Activated B cell treated with CpG ODN at 0.5 μM for 24 hours (primary cell): ENCODE measurements at regions of chr16 and their contacts with region 1.

Region 1: DNA sequence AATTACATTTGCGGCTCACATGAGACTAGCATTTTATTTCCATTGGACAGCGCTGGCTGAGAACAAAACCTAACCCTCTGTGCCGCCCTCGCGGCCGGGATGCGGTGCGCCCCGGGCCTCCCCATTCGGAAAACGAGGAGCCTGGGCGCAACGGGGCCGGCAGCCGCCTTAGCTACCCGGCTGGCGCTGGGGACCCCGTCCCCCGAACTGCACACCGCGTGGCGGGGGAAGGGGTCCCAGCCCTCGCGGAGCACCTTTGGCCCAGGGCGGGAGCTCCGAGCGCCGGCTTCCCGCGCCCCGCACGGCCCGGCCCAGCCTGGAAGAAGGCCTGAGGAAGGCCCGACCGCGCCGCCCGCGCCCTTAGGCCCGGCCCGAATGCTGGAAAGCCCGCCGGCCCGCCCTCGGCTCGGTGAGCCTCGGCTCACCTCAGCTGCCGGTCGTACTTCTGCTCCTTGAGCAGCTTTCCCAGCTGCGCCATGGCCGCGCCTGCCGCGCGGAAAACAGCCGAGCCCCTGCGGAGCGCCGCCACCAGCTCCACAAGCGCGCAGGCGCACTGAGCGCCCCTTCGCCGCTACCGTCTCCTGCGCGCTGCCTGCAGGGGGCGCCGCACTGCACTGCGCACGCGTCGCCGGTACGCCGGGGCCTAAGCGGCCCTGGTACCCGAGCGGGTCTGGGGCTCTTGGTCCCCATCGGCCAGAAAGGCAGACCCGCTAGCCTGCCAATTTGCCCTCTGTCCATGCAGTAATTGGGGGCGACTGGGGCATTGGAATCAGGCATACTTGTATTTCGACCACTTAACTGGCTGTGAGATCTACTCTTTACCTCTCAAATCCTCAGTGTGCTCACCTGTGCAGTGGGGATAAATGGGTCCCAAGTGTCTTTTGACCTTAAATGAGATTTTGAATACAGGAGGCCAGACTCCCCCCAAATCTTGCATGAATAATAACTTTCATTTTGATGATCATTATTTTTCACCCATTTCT is at the start of gene NAE1:
- DNase-seq: peak; percentile 94
- ATAC-seq: peak; percentile 98
- H3K4me3 Mint-ChIP-seq: peak within 1 kb of the TSS; percentile 78
- H3K27ac Mint-ChIP-seq: peak within 1 kb of the TSS; percentile 53
- H3K4me1 Mint-ChIP-seq: peaks cover 27% of the 10 kb centered on the region
- H3K27me3 Mint-ChIP-seq: no peaks in the 10 kb centered on the region
- CTCF ChIP-seq: peak; percentile 94
- total RNA-seq, gene NAE1: 53.7 and 54.1 TPM in 2 replicates

Region 2: DNA sequence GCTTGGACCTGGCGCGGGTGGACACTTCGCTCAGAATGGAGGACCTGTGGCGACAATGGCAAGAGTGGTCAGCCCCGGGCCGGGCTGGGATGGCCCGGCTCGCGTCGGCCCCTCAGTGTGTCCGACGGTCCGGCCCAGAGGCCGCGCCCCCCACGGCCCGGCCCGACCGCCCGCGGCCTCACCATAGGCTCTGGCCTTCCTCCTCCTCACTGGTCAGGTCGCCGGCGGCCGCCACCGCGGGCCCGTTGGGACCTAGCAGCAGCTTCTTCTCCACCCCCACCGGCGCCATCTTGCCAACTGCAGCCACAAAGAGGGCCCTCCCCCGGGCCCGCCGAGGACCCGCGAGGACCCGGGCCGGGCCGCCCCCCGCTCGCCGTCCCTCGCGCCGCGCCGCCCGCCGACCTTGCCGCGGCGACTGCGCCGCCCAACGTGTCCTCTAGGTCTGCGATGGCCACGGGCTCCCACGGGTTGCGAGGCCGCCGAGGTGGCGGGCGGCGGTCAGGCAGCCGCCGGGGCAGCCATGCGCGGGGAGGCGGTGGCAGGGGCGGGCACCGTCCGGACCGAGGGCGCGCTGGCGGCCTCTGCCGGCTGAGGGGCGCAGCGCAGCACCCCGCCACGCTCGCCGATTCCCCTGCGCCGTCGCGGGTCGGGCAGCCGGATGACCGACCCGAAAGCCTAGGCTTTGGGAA is 79.3 kb before region 1 on chr16 and contains the start of gene DYNC1LI2:
- CTCF ChIA-PET with region 1: interaction called, 4 read pairs
- POLR2A ChIA-PET with region 1: no interaction called
- intact Hi-C with region 1: loop called (anchors 2 kb)
- DNase-seq: peak; percentile 92
- ATAC-seq: peak; percentile 96
- H3K4me3 Mint-ChIP-seq: peak within 1 kb of the TSS; percentile 88
- H3K27ac Mint-ChIP-seq: peak within 1 kb of the TSS; percentile 87
- H3K4me1 Mint-ChIP-seq: peaks cover 34% of the 10 kb centered on the region
- H3K27me3 Mint-ChIP-seq: peaks cover 7% of the 10 kb centered on the region
- CTCF ChIP-seq: no peak
- total RNA-seq, gene DYNC1LI2: 64.3 and 84.4 TPM in 2 replicates

Region 3: DNA sequence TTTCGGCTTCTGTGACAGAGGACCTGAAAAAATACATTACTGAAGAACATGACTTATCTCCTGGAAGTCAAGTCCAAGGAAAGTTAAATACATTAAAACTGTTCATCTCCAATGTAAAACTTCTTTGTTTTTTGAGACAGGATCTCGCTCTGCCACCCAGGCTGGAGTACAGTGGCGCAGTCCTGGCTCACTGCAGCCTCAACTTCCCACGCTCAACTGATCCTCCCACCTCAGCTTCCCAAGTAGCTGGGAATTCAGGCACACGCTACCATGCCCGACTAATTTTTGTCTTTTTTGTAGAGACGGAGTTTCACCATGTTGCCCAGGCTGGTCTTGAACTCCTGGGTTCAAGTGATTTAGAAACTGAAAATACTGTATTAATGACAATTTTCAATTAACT is 19.7 kb before region 1 on chr16:
- CTCF ChIA-PET with region 1: interaction called, 11 read pairs
- POLR2A ChIA-PET with region 1: no interaction called
- intact Hi-C with region 1: no loop called
- DNase-seq: no peak
- ATAC-seq: no peak
- H3K4me3 Mint-ChIP-seq: no peak overlapping the region
- H3K27ac Mint-ChIP-seq: no peak overlapping the region
- H3K4me1 Mint-ChIP-seq: no peaks in the 10 kb centered on the region
- H3K27me3 Mint-ChIP-seq: no peaks in the 10 kb centered on the region
- CTCF ChIP-seq: no peak

Region 4: GRCh38 chr16:66858740-66859396 is 28.2 kb after region 1 on chr16:
- CTCF ChIA-PET with region 1: interaction called, 5 read pairs
- POLR2A ChIA-PET with region 1: interaction called, 20 read pairs
- intact Hi-C with region 1: no loop called
- DNase-seq: no peak
- ATAC-seq: peak; percentile 18
- H3K4me3 Mint-ChIP-seq: no peak overlapping the region
- H3K27ac Mint-ChIP-seq: no peak overlapping the region
- H3K4me1 Mint-ChIP-seq: no peaks in the 10 kb centered on the region
- H3K27me3 Mint-ChIP-seq: peaks cover 2% of the 10 kb centered on the region
- CTCF ChIP-seq: no peak

Region 5: DNA sequence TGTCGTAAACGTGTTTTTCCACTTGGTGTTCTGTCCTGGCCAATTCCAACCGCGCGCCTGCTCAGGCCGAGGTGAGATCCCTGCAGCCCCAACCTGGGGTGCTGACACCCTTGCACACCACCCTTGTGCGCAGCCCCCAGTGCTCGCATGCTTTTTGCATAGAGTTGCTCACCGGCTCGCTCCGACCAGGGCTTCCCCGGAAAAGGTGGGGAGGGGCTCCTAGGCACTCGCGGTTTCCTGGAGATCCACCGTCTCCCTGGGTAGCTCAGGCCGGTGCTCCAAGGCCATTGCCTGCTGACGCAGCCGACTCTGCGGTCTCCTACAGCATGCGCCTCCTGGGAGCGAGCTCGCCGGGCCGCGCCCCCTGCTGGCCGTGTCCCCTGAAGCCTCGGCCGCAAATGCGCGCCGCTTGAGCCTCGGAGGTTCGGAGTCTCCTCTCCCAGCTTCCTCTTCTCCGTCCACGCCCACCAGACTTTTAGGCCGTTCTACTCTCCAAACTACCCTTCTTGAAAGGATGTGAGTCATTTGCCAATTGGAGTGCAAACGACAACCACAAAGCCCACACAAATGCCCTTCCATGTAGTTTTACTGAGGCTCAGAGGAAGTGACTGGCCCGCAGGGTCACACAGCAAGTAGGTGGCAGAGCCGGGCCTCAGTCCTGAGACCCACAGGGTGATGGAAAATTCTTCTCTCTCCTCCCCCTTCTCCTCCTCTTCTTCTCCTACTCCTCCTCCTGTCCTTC is 42.4 kb after region 1 on chr16:
- CTCF ChIA-PET with region 1: interaction called, 57 read pairs
- POLR2A ChIA-PET with region 1: interaction called, 11 read pairs
- intact Hi-C with region 1: loop called (anchors 1 kb)
- DNase-seq: peak; percentile 87
- ATAC-seq: peak; percentile 95
- H3K4me3 Mint-ChIP-seq: peak overlapping the region; percentile 80
- H3K27ac Mint-ChIP-seq: peak overlapping the region; percentile 76
- H3K4me1 Mint-ChIP-seq: peaks cover 15% of the 10 kb centered on the region
- H3K27me3 Mint-ChIP-seq: no peaks in the 10 kb centered on the region
- CTCF ChIP-seq: peak; percentile 51

Region 6: DNA sequence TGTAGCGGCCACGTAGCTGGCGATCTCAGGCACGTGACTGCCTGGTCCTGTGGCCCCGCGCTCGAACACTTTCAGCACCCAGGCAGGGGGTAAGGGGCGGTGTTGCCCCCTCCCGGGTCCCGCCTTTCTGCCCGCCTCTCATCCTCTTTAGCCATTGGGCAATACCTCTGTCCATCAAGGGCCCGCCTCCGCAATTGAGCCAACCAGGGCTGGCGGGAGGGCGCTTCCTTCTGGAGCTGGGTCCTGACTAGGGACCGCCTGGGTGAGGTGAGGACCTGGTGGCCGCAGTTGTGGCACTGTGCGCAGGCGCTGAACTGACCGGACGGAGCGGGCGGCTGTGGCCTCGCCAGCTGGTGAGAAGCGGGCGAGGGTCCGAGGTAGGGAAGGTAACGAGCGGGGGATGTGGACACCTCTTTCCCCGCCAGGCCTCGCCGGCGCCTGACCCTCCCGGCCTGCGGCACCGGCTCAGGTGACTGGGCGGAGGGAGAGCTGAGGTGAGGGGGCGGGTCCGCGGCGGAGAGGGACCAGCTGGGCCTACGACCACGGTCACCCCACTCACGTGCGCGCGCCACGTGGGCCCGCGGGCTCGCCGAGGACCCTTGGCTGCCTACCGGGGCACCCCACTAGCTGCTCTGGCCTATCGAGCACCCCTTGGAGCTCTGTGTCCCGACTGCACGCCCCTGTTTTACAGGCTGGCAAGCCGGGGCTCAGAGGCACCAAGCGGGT is 49.7 kb after region 1 on chr16 and contains the start of gene PDP2:
- CTCF ChIA-PET with region 1: interaction called, 13 read pairs
- POLR2A ChIA-PET with region 1: interaction called, 7 read pairs
- intact Hi-C with region 1: no loop called
- DNase-seq: peak; percentile 81
- ATAC-seq: peak; percentile 99
- H3K4me3 Mint-ChIP-seq: peak within 1 kb of the TSS; percentile 99
- H3K27ac Mint-ChIP-seq: peak within 1 kb of the TSS; percentile 86
- H3K4me1 Mint-ChIP-seq: peaks cover 12% of the 10 kb centered on the region
- H3K27me3 Mint-ChIP-seq: no peaks in the 10 kb centered on the region
- CTCF ChIP-seq: no peak
- total RNA-seq, gene PDP2: 13.0 and 13.2 TPM in 2 replicates

Region 7: GRCh38 chr16:66924527-66925321 is 94.0 kb after region 1 on chr16:
- CTCF ChIA-PET with region 1: no interaction called
- POLR2A ChIA-PET with region 1: no interaction called
- intact Hi-C with region 1: loop called (anchors 5 kb)
- DNase-seq: no peak
- ATAC-seq: peak; percentile 80
- H3K4me3 Mint-ChIP-seq: peak overlapping the region; percentile 76
- H3K27ac Mint-ChIP-seq: no peak overlapping the region
- H3K4me1 Mint-ChIP-seq: peaks cover 9% of the 10 kb centered on the region
- H3K27me3 Mint-ChIP-seq: peaks cover 33% of the 10 kb centered on the region
- CTCF ChIP-seq: no peak

Region 8: GRCh38 chr16:67246934-67247697 is 416.4 kb after region 1 on chr16 and contains the start of gene FHOD1:
- CTCF ChIA-PET with region 1: no interaction called
- POLR2A ChIA-PET with region 1: no interaction called
- intact Hi-C with region 1: no loop called
- DNase-seq: peak; percentile 100
- ATAC-seq: peak; percentile 70
- H3K4me3 Mint-ChIP-seq: peak within 1 kb of the TSS; percentile 85
- H3K27ac Mint-ChIP-seq: peak within 1 kb of the TSS; percentile 80
- H3K4me1 Mint-ChIP-seq: peaks cover 50% of the 10 kb centered on the region
- H3K27me3 Mint-ChIP-seq: peaks cover 2% of the 10 kb centered on the region
- CTCF ChIP-seq: no peak
- total RNA-seq, gene FHOD1: 45.5 and 50.4 TPM in 2 replicates